ENCODE measurements at regions of chr5 and their contacts with region 1.

Region 1: GRCh38 chr5:64207978-64208377 is 42.3 kb downstream of the RNF180 start:
- DNase-seq: peak; percentile 3
- H3K4me3 Mint-ChIP-seq: no peak overlapping the region
- H3K27ac Mint-ChIP-seq: no peak overlapping the region
- H3K4me1 Mint-ChIP-seq: peaks cover 9% of the 10 kb centered on the region
- H3K27me3 Mint-ChIP-seq: no peaks in the 10 kb centered on the region
- CTCF ChIP-seq: no peak

Region 2: DNA sequence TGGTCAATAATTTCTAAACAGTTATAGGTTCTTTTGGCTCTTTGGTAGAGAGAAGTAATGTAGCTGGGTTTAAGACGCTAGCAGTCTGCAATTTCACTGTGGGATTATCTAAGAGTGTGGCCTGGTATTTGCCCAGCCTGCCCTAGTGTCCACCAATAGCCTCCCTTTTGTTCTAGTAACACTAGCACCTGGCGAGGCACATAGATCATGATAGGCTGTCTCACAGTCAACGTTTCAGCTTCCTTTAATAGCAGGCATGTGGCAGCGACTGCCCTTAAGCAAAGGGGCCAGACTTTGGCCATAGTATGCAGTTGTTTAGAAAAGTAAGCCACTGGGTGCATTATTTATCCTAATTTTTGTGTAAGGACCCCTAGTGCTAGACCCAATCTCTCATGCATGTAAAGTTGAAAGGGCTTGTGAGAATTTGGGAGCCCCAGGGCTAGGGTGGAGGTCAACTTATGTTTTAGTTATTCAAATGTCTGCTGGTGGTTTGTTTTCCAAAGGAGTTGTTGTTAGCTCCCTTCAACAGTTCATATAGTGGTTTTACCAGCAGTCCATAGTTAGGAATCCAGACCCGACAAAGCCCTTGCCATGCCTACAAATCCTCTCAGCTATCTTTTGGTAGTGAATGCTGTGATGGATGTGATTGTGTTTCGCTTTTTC is 520.0 kb before region 1 on chr5:
- CTCF ChIA-PET with region 1: no interaction called
- intact Hi-C with region 1: no loop called
- DNase-seq: no peak
- H3K4me3 Mint-ChIP-seq: no peak overlapping the region
- H3K27ac Mint-ChIP-seq: no peak overlapping the region
- H3K4me1 Mint-ChIP-seq: peaks cover 13% of the 10 kb centered on the region
- H3K27me3 Mint-ChIP-seq: no peaks in the 10 kb centered on the region
- CTCF ChIP-seq: no peak

Region 3: GRCh38 chr5:64074533-64074932 is 133.4 kb before region 1 on chr5:
- CTCF ChIA-PET with region 1: no interaction called
- intact Hi-C with region 1: loop called (anchors 1 kb)
- DNase-seq: peak; percentile 26
- H3K4me3 Mint-ChIP-seq: no peak overlapping the region
- H3K27ac Mint-ChIP-seq: no peak overlapping the region
- H3K4me1 Mint-ChIP-seq: no peaks in the 10 kb centered on the region
- H3K27me3 Mint-ChIP-seq: peaks cover 15% of the 10 kb centered on the region
- CTCF ChIP-seq: peak; percentile 33

Region 4: DNA sequence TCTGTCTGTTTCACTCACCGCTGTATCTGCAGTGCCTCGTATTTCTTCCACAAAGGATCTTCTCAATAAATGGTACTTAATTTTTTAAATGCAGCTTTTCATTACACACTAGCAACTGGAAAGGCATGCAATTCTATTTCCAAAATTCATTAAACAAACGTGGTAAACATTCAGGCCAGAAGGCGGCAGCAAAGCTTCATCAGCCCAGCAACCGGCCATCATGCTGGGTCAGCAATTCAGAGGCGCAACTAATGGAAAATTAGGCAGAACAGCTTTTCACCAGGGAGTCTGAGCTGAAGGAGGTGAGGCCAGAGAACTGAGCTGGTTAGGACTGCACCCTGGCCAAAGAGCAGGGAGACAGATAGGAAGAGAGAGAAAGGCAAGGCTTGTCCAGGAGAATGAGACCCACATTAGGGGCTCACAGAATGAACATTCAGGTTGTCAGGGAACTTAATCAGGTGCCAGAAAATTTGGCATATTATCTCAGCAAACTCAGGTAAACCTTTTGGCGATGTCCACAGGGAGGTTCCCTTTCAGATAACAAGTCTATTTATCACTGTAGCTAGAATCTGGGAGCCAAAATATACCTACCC is 60.0 kb before region 1 on chr5:
- CTCF ChIA-PET with region 1: interaction called, 13 read pairs
- intact Hi-C with region 1: loop called (anchors 1 kb)
- DNase-seq: peak; percentile 59
- H3K4me3 Mint-ChIP-seq: no peak overlapping the region
- H3K27ac Mint-ChIP-seq: no peak overlapping the region
- H3K4me1 Mint-ChIP-seq: no peaks in the 10 kb centered on the region
- H3K27me3 Mint-ChIP-seq: peaks cover 12% of the 10 kb centered on the region
- CTCF ChIP-seq: peak; percentile 67

Region 5: DNA sequence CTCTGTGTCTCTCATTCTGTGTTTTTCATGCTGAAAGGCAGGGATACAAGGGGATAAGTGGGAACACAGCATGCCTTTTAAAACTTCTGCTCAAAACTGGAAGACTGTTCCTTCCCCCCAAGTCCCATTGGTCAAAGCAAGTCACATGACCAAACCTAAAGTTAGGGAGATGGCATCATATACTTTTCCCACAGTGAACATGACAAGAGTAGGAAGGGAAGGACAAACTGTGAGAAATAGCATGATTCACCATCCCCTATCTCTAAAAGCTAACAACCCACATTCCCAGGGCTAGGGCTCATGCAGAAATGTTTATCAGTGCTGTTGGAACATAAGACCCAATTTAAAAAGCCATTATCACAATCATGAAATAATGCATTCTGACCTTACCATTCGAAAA is 458.1 kb after region 1 on chr5:
- CTCF ChIA-PET with region 1: no interaction called
- intact Hi-C with region 1: no loop called
- DNase-seq: no peak
- H3K4me3 Mint-ChIP-seq: no peak overlapping the region
- H3K27ac Mint-ChIP-seq: no peak overlapping the region
- H3K4me1 Mint-ChIP-seq: no peaks in the 10 kb centered on the region
- H3K27me3 Mint-ChIP-seq: no peaks in the 10 kb centered on the region
- CTCF ChIP-seq: no peak